Natural killer cell (primary cell): ENCODE measurements at regions of chr17 and their contacts with region 1.

Region 1: DNA sequence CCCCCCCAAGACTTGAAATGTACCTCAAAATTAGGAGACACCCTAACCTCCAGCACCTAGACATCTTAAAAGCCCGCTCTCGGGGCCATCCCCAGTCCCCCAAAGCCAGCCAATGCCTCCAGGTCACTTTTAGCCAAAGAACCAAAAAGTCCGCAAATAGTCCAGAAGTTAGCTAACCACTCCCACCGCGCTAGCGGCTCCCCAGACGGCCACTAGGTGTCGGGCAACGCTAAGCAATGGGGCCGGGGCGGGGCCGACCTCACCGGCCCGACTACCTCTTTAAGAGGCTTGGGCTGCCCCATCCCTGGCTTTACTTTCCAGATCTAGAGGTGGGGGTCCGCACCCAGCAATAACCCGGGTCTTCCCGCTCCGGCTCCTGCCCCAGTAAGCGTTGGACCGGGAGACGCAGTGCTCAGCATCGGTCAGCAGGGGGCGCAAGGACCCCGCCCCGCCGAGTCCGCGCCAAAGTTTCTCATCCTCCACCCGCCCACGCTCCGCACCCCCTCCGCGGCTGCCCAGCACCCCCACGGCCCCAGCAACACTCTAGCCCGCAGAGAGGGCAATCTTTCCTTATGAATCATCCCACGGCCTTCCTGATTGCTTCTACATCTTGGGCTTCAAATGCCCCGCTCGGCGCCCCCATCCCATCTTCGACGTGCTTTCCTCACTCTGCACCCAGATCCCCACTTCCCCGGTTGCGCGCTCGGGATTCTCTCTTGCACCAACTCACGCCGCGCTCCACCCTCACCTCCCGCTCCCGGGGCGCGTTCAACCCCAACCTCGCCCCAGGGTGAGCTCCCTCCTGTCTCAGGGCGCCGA is 765 bp downstream of the COL1A1 start:
- DNase-seq: peak; percentile 81 to 89
- ATAC-seq: peak; percentile 77 to 85 (median 84)
- H3K4me3 ChIP-seq: peak overlapping the region; percentile 37
- H3K4me3 Mint-ChIP-seq: peak overlapping the region; percentile 73
- H3K27ac ChIP-seq: no peak overlapping the region
- H3K27ac Mint-ChIP-seq: peak overlapping the region in 1 of 2 donors; percentile 81
- H3K4me1 ChIP-seq: peaks cover 17% of the 10 kb centered on the region
- H3K4me1 Mint-ChIP-seq: peaks cover 13 to 19% of the 10 kb centered on the region in 2 donors
- H3K27me3 ChIP-seq: peaks cover 24% of the 10 kb centered on the region
- H3K27me3 Mint-ChIP-seq: peaks cover 58 to 65% of the 10 kb centered on the region in 2 donors
- CTCF ChIP-seq: peak; percentile 100

Region 2: DNA sequence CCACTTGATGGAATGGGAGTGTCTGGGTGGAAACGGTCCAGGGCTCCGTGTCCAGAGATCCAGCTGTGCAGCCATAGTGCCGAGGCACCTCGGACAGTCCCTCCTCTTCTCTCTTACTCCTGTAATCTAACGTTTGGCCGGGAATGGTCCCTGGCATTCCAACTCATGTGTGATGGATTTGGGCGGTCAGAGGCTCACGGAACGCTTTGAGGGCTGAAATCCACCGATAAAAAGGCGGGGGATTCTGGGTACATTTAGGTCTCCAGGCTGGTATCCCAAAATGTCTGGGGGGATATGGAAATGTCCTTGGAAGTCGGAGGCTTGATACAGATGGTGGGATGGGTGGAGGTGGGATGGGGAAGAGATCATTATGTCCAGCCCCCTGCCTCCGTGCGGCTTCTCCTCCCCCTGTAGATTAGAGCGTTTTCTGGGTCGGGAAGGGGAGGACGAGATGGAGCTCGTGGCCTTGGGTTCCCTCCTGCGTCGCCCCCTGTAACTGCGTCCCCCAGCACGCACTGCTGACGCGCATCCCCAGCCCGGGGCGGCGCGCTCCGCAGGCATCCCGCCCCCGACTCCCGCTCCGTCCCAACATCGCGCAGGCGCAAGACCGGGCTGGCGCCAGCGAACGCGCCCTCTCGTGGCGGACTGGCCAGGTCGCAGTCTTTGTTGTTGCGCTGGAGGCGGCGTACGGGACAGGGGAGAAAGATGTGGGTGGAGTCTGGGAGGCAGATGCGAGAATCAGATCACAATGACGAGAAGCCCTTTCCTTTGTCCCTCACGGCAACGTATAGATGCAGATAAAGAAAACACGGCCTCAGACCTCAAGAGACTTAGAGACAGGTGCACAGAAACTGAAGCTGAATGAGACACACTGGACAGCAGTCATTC is 39.4 kb before region 1 on chr17:
- intact Hi-C with region 1: no loop called
- DNase-seq: peak; percentile 91 to 98
- ATAC-seq: peak; percentile 99
- H3K4me3 ChIP-seq: peak overlapping the region; percentile 30
- H3K4me3 Mint-ChIP-seq: peak overlapping the region; percentile 42
- H3K27ac ChIP-seq: no peak overlapping the region
- H3K27ac Mint-ChIP-seq: peak overlapping the region; percentile 19 to 73
- H3K4me1 ChIP-seq: peaks cover 22% of the 10 kb centered on the region
- H3K4me1 Mint-ChIP-seq: peaks cover 23 to 27% of the 10 kb centered on the region in 2 donors
- H3K27me3 ChIP-seq: no peaks in the 10 kb centered on the region
- H3K27me3 Mint-ChIP-seq: peaks cover 0 to 9% of the 10 kb centered on the region in 2 donors
- CTCF ChIP-seq: peak; percentile 94

Region 3: GRCh38 chr17:50173335-50173941 is 27.2 kb before region 1 on chr17:
- intact Hi-C with region 1: no loop called
- DNase-seq: no peak
- ATAC-seq: no peak
- H3K4me3 ChIP-seq: no peak overlapping the region
- H3K4me3 Mint-ChIP-seq: no peak overlapping the region
- H3K27ac ChIP-seq: no peak overlapping the region
- H3K27ac Mint-ChIP-seq: no peak overlapping the region
- H3K4me1 ChIP-seq: peaks cover 19% of the 10 kb centered on the region
- H3K4me1 Mint-ChIP-seq: peaks cover 19 to 20% of the 10 kb centered on the region in 2 donors
- H3K27me3 ChIP-seq: no peaks in the 10 kb centered on the region
- H3K27me3 Mint-ChIP-seq: peaks cover 0 to 9% of the 10 kb centered on the region in 2 donors
- CTCF ChIP-seq: no peak

Region 4: DNA sequence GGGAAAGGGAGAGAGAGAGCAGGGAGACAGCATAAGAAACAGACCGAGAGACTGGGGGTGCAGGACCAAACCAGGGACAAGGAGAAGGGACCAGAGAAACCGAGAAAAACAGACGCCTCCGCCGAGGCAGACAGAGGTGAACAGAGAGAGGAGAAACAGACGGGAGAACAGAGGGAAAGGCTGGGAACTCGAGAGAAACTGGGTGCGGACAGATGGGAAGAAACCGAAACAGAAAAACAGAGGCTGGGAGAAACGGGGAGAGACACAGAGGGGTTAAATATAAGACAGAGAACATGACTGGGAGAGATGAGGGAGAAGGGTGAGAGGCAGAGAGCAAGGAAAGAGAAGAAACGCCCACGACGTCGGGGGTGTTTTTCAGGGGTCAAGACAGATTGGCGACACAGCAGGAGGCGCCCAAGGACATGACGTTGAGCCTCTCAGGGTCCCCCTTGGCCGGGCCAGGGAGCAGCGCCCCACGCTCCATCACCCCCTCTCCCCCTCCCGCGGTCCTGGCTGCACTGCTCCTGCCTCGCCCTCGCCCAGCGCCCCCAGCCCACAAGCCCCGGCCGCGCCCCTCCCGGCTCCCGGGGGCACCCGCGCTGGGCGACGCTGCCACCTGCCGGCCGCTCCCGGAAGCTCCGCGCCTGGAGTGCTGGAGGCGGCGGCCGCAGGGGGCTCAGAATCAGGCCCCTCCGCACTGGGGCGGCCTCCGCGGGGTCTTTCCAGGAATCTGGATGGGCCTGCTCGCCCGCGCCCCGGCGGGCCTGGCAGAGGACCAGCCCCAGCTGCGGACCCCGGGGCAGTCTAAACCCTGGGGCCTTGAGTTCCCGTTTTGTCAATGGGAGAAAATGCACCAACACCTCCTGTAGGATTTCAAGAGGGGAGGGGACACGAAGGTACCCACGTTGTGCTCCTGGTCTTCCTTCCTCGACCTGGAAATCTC is 72.3 kb after region 1 on chr17:
- intact Hi-C with region 1: loop called (anchors 1 kb)
- DNase-seq: peak; percentile 61 to 70
- ATAC-seq: peak; percentile 71 to 78 (median 72)
- H3K4me3 ChIP-seq: peak overlapping the region; percentile 19
- H3K4me3 Mint-ChIP-seq: peak overlapping the region; percentile 79
- H3K27ac ChIP-seq: no peak overlapping the region
- H3K27ac Mint-ChIP-seq: peak overlapping the region in 1 of 2 donors; percentile 72
- H3K4me1 ChIP-seq: peaks cover 11% of the 10 kb centered on the region
- H3K4me1 Mint-ChIP-seq: peaks cover 7 to 9% of the 10 kb centered on the region in 2 donors
- H3K27me3 ChIP-seq: peaks cover 11% of the 10 kb centered on the region
- H3K27me3 Mint-ChIP-seq: peaks cover 33 to 34% of the 10 kb centered on the region in 2 donors
- CTCF ChIP-seq: peak; percentile 92

Region 5: GRCh38 chr17:50297407-50297865 is 96.8 kb after region 1 on chr17:
- intact Hi-C with region 1: loop called (anchors 1 kb)
- DNase-seq: peak; percentile 66 to 86
- ATAC-seq: peak; percentile 89 to 98 (median 97)
- H3K4me3 ChIP-seq: no peak overlapping the region
- H3K4me3 Mint-ChIP-seq: no peak overlapping the region
- H3K27ac ChIP-seq: no peak overlapping the region
- H3K27ac Mint-ChIP-seq: no peak overlapping the region
- H3K4me1 ChIP-seq: no peaks in the 10 kb centered on the region
- H3K4me1 Mint-ChIP-seq: peaks cover 2% of the 10 kb centered on the region in 2 donors
- H3K27me3 ChIP-seq: peaks cover 2% of the 10 kb centered on the region
- H3K27me3 Mint-ChIP-seq: peaks cover 2 to 16% of the 10 kb centered on the region in 2 donors
- CTCF ChIP-seq: peak; percentile 78